MCF 10A (cell line): ENCODE measurements at regions of chr17 and their contacts with region 1.

Region 1: DNA sequence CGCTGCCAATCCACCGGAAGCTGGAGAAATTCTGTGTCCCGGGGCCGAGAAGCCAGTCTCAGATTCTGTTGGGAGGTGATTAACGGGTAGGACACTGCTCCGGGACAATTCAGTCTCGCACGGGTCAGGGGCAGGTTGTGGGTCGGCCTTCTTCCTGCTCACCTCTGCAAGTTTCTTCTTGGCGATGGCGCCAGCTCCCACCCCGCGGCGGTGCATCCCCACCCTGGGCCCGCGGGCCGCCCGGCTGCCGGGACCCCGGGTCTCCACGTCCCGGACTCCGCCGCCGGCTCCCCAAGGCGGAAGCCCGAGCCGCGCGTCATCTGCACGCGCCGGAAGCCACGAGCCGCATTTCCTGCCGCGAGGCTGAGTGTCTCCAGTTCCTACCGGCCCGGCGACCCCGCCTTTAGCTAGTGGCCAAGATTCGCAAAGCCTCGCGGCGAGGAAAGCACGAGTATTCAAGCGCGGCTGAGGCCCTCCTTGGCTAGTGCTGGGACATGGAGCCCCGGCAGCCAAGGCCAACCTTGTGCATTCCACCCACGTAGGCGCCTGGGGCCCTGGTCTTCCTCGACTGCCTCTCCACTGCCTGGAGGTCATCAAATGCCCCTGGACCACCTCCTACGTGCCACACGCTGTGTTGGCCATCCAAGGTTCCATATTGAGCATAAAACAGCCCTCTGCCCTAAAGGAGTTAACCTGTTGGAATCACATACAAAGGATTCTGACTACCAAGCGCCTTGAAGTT is at the start of gene SNF8:
- DNase-seq: peak; percentile 86
- H3K4me3 Mint-ChIP-seq: peak within 1 kb of the TSS; percentile 89
- H3K27ac Mint-ChIP-seq: peak within 1 kb of the TSS; percentile 83
- H3K4me1 Mint-ChIP-seq: no peaks in the 10 kb centered on the region
- H3K27me3 Mint-ChIP-seq: no peaks in the 10 kb centered on the region
- CTCF ChIP-seq: no peak
- total RNA-seq, gene SNF8: 156 and 184 TPM in 2 replicates

Region 2: GRCh38 chr17:48892940-48893645 is 51.6 kb before region 1 on chr17:
- CTCF ChIA-PET with region 1: no interaction called
- POLR2A ChIA-PET with region 1: interaction called, 50 read pairs
- intact Hi-C with region 1: no loop called
- DNase-seq: no peak
- H3K4me3 Mint-ChIP-seq: peak overlapping the region; percentile 99
- H3K27ac Mint-ChIP-seq: peak overlapping the region; percentile 95
- H3K4me1 Mint-ChIP-seq: no peaks in the 10 kb centered on the region
- H3K27me3 Mint-ChIP-seq: no peaks in the 10 kb centered on the region
- CTCF ChIP-seq: no peak

Region 3: GRCh38 chr17:48908047-48908843 is 36.4 kb before region 1 on chr17 and contains the start of gene UBE2Z:
- CTCF ChIA-PET with region 1: interaction called, 3 read pairs
- POLR2A ChIA-PET with region 1: interaction called, 31 read pairs
- intact Hi-C with region 1: no loop called
- DNase-seq: peak; percentile 93
- H3K4me3 Mint-ChIP-seq: peak within 1 kb of the TSS; percentile 93
- H3K27ac Mint-ChIP-seq: peak within 1 kb of the TSS; percentile 95
- H3K4me1 Mint-ChIP-seq: peaks cover 32% of the 10 kb centered on the region
- H3K27me3 Mint-ChIP-seq: no peaks in the 10 kb centered on the region
- CTCF ChIP-seq: no peak
- total RNA-seq, gene UBE2Z: 106 and 115 TPM in 2 replicates

Region 4: GRCh38 chr17:48915459-48916282 is 29.0 kb before region 1 on chr17:
- CTCF ChIA-PET with region 1: interaction called, 4 read pairs
- POLR2A ChIA-PET with region 1: interaction called, 35 read pairs
- intact Hi-C with region 1: loop called (anchors 2 kb)
- DNase-seq: peak; percentile 94
- H3K4me3 Mint-ChIP-seq: peak overlapping the region; percentile 68
- H3K27ac Mint-ChIP-seq: peak overlapping the region; percentile 98
- H3K4me1 Mint-ChIP-seq: peaks cover 39% of the 10 kb centered on the region
- H3K27me3 Mint-ChIP-seq: no peaks in the 10 kb centered on the region
- CTCF ChIP-seq: no peak

Region 5: DNA sequence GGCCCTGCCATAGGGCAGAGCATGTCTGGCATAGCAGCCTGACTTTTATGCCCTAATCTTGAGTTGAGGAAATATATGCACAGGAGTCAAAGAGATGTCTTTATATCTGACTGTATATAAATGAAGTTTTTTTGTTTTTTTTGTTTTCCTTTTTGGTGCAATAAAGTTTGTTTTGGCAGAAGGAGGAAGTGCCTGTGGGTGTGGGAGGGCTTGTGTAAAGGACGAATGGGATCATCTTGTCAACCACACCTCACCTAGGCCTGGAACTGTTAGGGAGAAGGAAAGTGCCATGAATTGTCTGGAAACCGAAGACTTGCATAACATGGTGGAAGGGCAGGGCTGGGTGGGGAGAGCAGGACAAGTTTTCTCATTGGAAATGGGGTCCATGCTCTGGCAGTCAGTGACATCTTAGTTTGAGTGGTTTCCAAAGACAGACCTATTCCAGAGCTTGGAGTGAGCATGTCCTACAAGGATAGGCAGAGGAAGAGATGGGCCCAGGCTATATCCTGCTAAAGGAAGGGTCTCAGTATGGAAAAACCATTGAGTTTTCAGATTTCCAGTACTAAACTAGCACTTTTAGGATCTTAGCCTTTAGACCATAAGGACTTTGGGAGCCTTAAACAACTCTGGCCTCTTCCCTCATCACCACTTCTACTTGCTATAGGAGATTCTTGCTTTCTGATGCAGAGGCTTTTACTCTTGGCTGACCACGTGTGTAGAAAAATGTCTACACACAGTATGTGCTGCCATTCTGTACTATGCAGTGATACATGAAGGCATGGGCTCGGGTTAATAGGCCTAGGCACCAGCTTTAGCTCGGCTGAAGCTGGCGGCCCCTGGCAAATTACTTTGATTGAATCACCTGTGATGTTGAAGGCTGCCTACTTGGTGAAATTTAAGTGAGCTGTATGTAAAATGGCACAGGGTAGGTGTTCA is 15.5 kb before region 1 on chr17:
- CTCF ChIA-PET with region 1: interaction called, 3 read pairs
- POLR2A ChIA-PET with region 1: interaction called, 13 read pairs
- intact Hi-C with region 1: no loop called
- DNase-seq: no peak
- H3K4me3 Mint-ChIP-seq: no peak overlapping the region
- H3K27ac Mint-ChIP-seq: peak overlapping the region; percentile 14
- H3K4me1 Mint-ChIP-seq: peaks cover 19% of the 10 kb centered on the region
- H3K27me3 Mint-ChIP-seq: no peaks in the 10 kb centered on the region
- CTCF ChIP-seq: no peak

Region 6: GRCh38 chr17:48997083-48997826 is 52.6 kb after region 1 on chr17 and contains the start of gene IGF2BP1:
- CTCF ChIA-PET with region 1: no interaction called
- POLR2A ChIA-PET with region 1: no interaction called
- intact Hi-C with region 1: no loop called
- DNase-seq: no peak
- H3K4me3 Mint-ChIP-seq: no peak within 1 kb of the TSS
- H3K27ac Mint-ChIP-seq: no peak within 1 kb of the TSS
- H3K4me1 Mint-ChIP-seq: no peaks in the 10 kb centered on the region
- H3K27me3 Mint-ChIP-seq: peaks cover 93% of the 10 kb centered on the region
- CTCF ChIP-seq: no peak
- total RNA-seq, gene IGF2BP1: 0.02 and 0.27 TPM in 2 replicates

Region 7: GRCh38 chr17:49053171-49053829 is 108.6 kb after region 1 on chr17:
- CTCF ChIA-PET with region 1: no interaction called
- POLR2A ChIA-PET with region 1: no interaction called
- intact Hi-C with region 1: no loop called
- DNase-seq: no peak
- H3K4me3 Mint-ChIP-seq: no peak overlapping the region
- H3K27ac Mint-ChIP-seq: no peak overlapping the region
- H3K4me1 Mint-ChIP-seq: no peaks in the 10 kb centered on the region
- H3K27me3 Mint-ChIP-seq: no peaks in the 10 kb centered on the region
- CTCF ChIP-seq: no peak

Region 8: DNA sequence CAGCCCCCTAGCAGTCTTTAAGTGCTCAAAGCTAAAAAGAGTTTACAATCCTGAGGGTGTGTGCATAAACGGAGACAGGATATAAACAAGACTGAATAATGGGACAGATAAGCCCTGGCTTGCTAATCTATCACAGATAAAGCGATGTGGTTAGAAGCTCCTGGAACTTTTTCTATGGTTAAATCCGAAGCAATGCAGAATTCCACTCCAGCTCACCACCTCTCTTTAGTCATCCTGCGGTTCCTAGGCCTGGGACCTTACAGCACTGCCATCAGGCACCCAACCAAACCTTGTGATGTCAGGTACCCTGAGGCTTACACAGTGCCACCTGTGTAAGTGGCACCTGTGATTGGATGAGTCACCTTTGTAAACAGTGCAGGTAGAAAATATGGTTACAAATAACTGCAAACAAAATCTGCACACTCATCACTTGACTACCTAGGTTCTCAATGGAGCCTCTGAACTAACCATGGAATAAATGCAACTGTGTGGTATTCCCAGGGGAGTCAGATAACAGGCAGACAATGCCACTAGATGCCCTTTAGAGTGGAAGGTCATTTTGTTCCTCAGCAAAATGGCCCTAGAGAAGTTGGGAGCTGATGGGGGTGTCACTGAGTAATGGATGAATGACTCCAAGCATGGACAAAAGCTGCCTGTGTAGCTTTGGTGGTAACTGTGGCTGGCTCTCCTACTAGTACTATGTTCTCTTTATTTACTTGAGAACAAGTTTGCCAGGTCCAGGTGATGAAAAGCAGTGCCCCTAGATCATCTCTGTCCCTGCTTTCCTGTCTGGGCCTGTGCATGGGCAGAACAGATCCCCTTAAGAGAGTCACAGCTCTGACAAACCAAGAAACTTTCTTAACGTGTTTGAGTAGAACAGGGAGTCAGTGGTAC is 156.6 kb after region 1 on chr17:
- CTCF ChIA-PET with region 1: no interaction called
- POLR2A ChIA-PET with region 1: no interaction called
- intact Hi-C with region 1: no loop called
- DNase-seq: no peak
- H3K4me3 Mint-ChIP-seq: no peak overlapping the region
- H3K27ac Mint-ChIP-seq: peak overlapping the region; percentile 74
- H3K4me1 Mint-ChIP-seq: peaks cover 18% of the 10 kb centered on the region
- H3K27me3 Mint-ChIP-seq: no peaks in the 10 kb centered on the region
- CTCF ChIP-seq: no peak